AG04449 (cell line): ENCODE measurements at regions of chr17 and their contacts with region 1.

Region 1: DNA sequence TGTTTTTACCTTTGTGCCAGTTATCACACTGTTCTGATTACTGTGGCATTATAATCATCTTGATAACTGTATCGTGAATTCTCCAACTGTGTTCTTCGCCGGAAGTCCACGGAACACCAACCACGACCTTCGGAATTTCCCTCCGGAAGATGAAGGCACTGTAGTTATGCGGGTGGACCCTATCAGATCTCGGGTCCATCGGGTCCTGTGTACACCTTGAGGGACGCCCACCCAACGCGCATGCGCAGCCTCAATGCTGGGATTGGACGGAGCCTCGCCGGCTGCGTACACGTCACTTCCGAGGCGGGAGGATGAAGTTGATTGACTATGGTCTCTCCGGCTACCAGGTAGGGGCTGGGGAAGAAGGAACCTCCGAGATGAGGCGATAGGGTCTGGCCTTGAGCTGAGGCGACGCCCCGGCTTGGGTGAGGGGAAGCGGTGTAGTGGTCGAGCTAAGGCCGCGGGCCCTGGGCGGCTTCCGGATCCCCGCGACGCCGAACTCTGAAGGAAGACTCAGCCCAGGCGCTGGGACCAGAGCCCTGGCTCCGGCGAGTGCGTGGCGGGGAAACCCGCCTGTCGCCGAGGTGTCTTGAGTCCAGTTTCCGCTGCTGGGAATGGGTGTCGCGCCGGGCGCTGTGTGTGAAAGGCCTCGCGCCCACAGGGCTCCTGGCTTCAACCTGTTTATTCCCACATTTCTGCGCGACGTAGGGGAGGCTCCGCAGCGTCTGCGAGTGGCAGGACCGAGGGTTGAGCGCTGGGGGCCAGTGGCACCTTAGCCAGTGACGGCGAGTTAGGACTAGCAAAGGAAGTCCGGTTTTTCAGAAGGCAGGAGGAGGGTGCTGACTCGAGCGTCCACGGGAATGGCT is at the start of gene DHRS7B:
- DNase-seq: peak; percentile 26
- H3K4me3 ChIP-seq: peak within 1 kb of the TSS; percentile 98
- CTCF ChIP-seq: no peak

Region 2: GRCh38 chr17:21140911-21141310 is 14.0 kb after region 1 on chr17:
- CTCF ChIA-PET with region 1: interaction called, 25 read pairs
- POLR2A ChIA-PET with region 1: no interaction called
- DNase-seq: no peak
- H3K4me3 ChIP-seq: no peak overlapping the region
- CTCF ChIP-seq: no peak

Region 3: GRCh38 chr17:21177854-21178600 is 51.1 kb after region 1 on chr17:
- CTCF ChIA-PET with region 1: interaction called, 10 read pairs
- POLR2A ChIA-PET with region 1: no interaction called
- DNase-seq: no peak
- H3K4me3 ChIP-seq: no peak overlapping the region
- CTCF ChIP-seq: no peak

Region 4: DNA sequence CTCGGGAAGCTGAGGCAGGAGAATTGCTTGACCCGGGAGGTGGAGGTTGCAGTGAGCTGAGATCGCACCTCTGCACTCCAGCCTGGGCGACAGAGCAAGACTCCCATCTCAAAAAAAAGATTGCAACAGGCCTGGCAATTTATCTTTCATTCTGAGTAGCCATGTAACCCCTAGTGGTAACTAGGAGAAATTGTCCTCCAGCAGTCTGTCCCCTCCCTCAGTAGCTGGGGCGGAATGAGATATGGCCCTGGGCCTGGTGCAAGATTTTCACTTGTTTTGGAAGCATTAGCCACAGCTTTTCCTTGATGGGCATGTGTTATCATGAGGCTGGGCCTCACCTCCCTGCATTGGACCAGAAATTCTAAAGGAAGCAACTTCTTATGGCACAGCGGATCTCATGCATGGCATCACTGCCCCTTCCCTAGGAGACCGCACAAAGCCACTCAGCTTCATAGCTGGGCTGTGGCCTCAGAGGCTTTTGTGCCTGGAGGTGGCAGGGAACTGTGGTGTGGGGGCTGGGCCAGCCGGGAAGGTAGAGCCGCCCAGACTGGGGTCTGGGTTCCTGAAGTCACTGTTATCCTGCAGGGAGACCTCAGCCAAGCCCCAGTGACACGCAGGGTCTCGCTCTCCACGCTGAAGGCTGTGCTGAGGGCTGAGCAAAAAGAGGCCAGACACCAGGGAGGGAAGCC is 112.9 kb after region 1 on chr17:
- CTCF ChIA-PET with region 1: interaction called, 49 read pairs
- POLR2A ChIA-PET with region 1: no interaction called
- DNase-seq: no peak
- H3K4me3 ChIP-seq: no peak overlapping the region
- CTCF ChIP-seq: peak; percentile 42

Region 5: GRCh38 chr17:21268596-21269188 is 141.8 kb after region 1 on chr17:
- CTCF ChIA-PET with region 1: interaction called, 37 read pairs
- POLR2A ChIA-PET with region 1: no interaction called
- DNase-seq: no peak
- H3K4me3 ChIP-seq: no peak overlapping the region
- CTCF ChIP-seq: no peak

Region 6: GRCh38 chr17:21284319-21285163 is 157.7 kb after region 1 on chr17 and contains the start of gene MAP2K3:
- CTCF ChIA-PET with region 1: interaction called, 64 read pairs
- POLR2A ChIA-PET with region 1: no interaction called
- DNase-seq: peak; percentile 96
- H3K4me3 ChIP-seq: peak within 1 kb of the TSS; percentile 91
- CTCF ChIP-seq: no peak